ENCODE measurements at regions of chr17 and their contacts with region 1.

Region 1: DNA sequence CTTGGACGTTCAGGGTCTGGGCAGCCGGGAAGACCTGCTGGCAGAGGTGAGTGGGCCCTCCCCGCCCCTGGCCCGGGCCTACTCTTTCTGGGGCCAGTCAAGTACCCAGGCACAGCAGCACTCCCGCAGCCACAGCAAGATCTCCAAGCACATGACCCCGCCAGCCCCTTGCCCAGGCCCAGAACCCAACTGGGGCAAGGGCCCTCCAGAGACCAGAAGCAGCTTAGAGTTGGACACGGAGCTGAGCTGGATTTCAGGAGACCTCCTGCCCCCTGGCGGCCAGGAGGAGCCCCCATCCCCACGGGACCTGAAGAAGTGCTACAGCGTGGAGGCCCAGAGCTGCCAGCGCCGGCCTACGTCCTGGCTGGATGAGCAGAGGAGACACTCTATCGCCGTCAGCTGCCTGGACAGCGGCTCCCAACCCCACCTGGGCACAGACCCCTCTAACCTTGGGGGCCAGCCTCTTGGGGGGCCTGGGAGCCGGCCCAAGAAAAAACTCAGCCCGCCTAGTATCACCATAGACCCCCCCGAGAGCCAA is 8.6 kb upstream of the ABCC3 start:
- DNase-seq: peak; percentile 66 to 91 (median 80)
- ATAC-seq: peak; percentile 60 to 78 (median 68)
- H3K4me3 ChIP-seq: no peak overlapping the region
- H3K27ac ChIP-seq: no peak overlapping the region
- H3K4me1 ChIP-seq: peaks cover 0 to 8% (median 0%) of the 10 kb centered on the region in 3 donors
- H3K27me3 ChIP-seq: no peaks in the 10 kb centered on the region
- CTCF ChIP-seq: peak; percentile 51 to 84 (median 70)

Region 2: DNA sequence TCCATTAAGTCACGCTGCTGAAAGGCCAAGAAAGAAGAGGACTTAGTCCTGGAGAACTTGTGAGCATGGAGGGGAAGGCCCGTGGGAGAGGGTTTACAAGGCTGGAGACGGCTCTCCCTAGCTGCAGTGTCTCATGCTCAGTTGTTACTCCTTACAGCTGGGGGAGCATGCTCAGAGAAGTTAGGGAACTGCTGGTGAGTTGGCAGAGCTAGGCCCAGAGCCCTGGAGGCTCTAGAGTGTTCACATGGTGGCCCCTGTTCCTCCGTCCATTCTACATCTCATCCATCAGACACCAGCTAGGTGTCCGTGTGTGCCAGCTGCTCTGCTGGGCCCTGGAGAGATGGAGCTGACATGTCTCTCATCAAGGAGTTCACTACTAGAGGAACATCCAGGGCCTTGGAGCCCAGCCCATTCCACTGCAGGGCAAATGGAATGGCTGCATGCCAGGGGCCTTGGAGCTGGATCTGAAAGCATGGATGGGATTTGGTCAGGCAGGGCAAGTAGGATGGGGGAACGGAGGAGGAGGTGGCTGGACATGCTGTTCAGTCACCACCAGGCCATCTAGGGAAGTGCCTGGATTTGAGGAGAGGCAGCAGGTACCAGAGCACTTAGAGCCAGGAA is 273.9 kb before region 1 on chr17:
- intact Hi-C with region 1: loop called in 1 of 3 experiments (anchors 10 kb)
- DNase-seq: peak in 3 of 6 donors; percentile 15 to 60 (median 18)
- ATAC-seq: no peak
- H3K4me3 ChIP-seq: no peak overlapping the region
- H3K27ac ChIP-seq: no peak overlapping the region
- H3K4me1 ChIP-seq: peaks cover 0 to 3% (median 0%) of the 10 kb centered on the region in 3 donors
- H3K27me3 ChIP-seq: no peaks in the 10 kb centered on the region
- CTCF ChIP-seq: no peak

Region 3: GRCh38 chr17:50534222-50534978 is 91.7 kb before region 1 on chr17:
- intact Hi-C with region 1: no loop called
- DNase-seq: peak; percentile 81 to 92 (median 84)
- ATAC-seq: peak; percentile 80 to 87 (median 84)
- H3K4me3 ChIP-seq: peak overlapping the region; percentile 13 to 53 (median 34)
- H3K27ac ChIP-seq: peak overlapping the region; percentile 73 to 92 (median 80)
- H3K4me1 ChIP-seq: peaks cover 9 to 35% (median 17%) of the 10 kb centered on the region in 3 donors
- H3K27me3 ChIP-seq: no peaks in the 10 kb centered on the region
- CTCF ChIP-seq: peak; percentile 25 to 59 (median 50)

Region 4: GRCh38 chr17:50689956-50690886 is 64.1 kb after region 1 on chr17:
- intact Hi-C with region 1: loop called in 1 of 3 experiments (anchors 5 kb)
- DNase-seq: no peak
- ATAC-seq: no peak
- H3K4me3 ChIP-seq: no peak overlapping the region
- H3K27ac ChIP-seq: peak overlapping the region; percentile 22 to 90 (median 56)
- H3K4me1 ChIP-seq: peaks cover 77 to 92% (median 84%) of the 10 kb centered on the region in 3 donors
- H3K27me3 ChIP-seq: no peaks in the 10 kb centered on the region
- CTCF ChIP-seq: no peak